ENCODE measurements at regions of chr6 and their contacts with region 1.

Region 1: GRCh38 chr6:122530440-122531046 is 58.9 kb upstream of the SERINC1 start:
- DNase-seq: peak; percentile 78
- ATAC-seq: peak; percentile 97
- H3K4me3 ChIP-seq: no peak overlapping the region
- H3K27ac ChIP-seq: no peak overlapping the region
- H3K4me1 ChIP-seq: no peaks in the 10 kb centered on the region
- H3K27me3 ChIP-seq: 0 out of 2 replicates have a peak, but pooled peaks cover 2% of the 10 kb centered on the region
- CTCF ChIP-seq: peak; percentile 90

Region 2: DNA sequence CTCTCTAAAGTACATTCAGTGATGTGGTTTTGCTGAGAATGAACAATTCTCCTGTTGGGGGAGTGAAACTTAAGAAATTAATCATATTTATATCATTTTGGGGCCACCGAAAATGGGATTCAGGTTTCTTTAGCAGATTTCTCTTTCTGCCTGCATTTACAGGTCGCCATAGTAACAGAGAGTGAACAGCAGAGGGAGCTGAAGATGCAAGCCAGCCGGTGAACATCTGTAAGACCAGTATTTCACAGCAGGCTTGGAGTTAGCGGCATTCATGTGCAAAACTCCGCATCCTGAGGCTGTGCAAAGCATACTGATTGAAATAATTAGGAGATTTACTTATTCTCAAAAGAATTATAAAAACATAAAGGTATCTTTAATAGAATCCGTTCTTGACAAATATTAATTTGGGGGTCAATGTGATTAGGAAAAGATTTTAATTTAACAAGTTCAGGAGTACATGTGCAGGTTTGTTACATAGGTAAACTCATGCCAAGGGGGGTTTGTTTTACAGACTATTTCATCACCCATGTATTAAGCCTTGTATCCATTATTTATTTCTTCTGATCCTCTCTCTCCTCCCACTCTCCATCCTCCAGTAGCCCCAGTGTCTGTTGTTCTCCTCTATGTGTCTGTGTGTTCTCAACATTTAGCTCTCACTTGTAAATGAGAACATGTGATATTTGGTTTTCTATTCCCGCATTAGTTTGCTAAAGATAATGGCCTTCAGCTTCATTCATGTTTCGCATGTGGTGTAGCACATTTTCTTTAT is 148.9 kb before region 1 on chr6:
- CTCF ChIA-PET with region 1: interaction called, 3 read pairs
- POLR2A ChIA-PET with region 1: no interaction called
- in situ Hi-C with region 1: no loop called
- intact Hi-C with region 1: loop called (anchors 1 kb)
- DNase-seq: peak; percentile 47
- ATAC-seq: peak; percentile 98
- H3K4me3 ChIP-seq: no peak overlapping the region
- H3K27ac ChIP-seq: no peak overlapping the region
- H3K4me1 ChIP-seq: no peaks in the 10 kb centered on the region
- H3K27me3 ChIP-seq: no peaks in the 10 kb centered on the region; the same call in 1 of the 2 replicates
- CTCF ChIP-seq: peak; percentile 93

Region 3: DNA sequence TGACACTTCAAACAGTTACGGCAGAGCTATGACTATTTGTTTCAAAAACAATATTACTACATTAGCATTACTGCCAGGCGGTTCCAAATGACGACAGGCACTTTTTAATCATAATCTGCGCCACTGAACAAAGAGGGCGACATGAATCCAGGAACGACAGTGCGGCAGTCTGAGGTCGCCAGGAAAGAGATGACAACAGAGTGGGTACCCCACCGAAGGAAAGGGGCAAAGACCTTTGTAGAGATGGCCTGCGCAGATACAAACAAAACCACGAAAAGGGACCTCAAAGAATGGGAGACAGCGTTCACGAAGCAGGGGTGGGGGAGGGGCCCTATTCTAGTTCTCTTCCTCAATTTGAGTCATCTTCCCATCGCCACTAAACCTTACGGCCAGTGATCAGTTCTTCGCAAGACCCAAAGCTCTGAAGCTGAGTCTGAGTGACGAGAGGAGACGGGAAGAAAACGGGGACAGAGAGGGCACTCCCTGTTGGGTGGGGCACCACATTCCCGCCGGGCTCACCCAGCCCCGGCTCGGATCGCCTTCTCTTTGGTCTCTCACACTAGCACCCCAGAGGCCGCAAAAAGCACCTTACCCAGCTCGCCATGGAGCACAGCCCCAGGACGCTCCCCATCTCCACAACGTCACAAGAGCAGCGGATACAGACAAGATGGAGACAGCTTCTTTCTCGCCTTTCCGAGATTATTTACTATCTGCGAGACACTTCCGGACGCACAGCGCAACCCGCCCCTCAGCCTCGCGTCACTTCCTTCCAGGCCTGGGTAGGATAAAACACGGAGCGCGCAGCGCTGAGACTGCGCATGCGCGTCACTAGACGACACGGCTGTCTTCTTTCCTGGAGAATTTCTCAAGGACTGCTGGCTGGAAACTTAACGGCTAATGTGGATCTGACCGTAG is 59.2 kb before region 1 on chr6 and contains the start of gene SERINC1:
- CTCF ChIA-PET with region 1: interaction called, 4 read pairs
- POLR2A ChIA-PET with region 1: interaction called, 3 read pairs
- in situ Hi-C with region 1: no loop called
- intact Hi-C with region 1: loop called (anchors 1 kb)
- DNase-seq: peak; percentile 88
- ATAC-seq: peak; percentile 100
- H3K4me3 ChIP-seq: peak within 1 kb of the TSS; percentile 96 to 99
- H3K27ac ChIP-seq: peak within 1 kb of the TSS; percentile 95
- H3K4me1 ChIP-seq: peaks cover 7% of the 10 kb centered on the region
- H3K27me3 ChIP-seq: no peaks in the 10 kb centered on the region
- CTCF ChIP-seq: no peak
- total RNA-seq, gene SERINC1: 131 TPM

Region 4: GRCh38 chr6:122491919-122492555 is 38.5 kb before region 1 on chr6:
- CTCF ChIA-PET with region 1: interaction called, 40 read pairs
- POLR2A ChIA-PET with region 1: no interaction called
- in situ Hi-C with region 1: no loop called
- intact Hi-C with region 1: loop called (anchors 1 kb)
- DNase-seq: peak; percentile 67
- ATAC-seq: peak; percentile 100
- H3K4me3 ChIP-seq: no peak overlapping the region
- H3K27ac ChIP-seq: no peak overlapping the region
- H3K4me1 ChIP-seq: no peaks in the 10 kb centered on the region
- H3K27me3 ChIP-seq: peaks cover 2% of the 10 kb centered on the region; the same call in 1 of the 2 replicates
- CTCF ChIP-seq: peak; percentile 94

Measured in Panc1 (cell line).